ENCODE measurements at regions of chr15 and their contacts with region 1.

Region 1: DNA sequence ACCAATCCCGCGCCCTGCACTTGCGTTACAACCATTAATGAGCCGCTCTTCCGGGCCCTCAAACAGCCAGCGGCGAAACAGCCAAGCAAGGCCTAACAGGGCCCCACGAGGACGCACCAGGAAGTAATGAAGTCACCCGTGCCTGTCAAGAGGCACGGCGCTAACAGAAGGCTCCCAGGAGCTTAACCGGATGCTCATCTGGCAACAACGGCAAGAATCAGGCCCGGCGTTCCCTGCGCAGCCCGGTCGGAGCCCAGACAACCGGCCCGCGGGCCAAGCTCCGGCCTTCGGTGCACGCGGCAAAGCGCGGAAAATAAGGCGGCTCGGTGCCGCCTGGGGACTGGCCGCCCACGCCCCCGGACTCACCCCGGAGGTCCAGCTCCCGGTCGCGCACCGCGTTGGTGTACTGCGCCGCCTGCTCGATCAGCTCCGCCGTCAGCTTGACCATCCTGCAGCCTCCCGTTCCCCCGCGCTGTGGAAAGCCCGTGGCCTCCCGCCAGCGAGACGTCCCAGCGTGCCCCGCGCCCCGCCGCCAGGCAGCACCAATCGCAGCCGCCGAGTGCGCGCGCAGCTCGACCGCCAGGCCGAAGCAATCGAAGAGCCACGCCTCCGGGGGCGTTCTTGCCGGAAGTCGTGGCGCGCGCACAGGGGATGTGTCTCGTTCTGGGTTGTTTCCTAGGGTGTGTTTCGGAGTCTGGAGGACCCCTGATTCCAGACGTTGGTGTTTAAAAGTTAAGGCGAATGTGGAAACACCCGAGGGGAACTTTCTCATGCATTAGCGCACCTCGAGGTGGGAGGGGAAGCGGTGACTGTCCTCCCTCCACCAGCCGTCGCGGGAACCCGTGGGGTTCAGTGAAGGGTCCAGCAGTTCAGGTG is at the start of gene SNRPA1:
- DNase-seq: peak; percentile 99
- ATAC-seq: peak; percentile 83
- H3K4me3 Mint-ChIP-seq: peak within 1 kb of the TSS; percentile 97
- H3K27ac Mint-ChIP-seq: peak within 1 kb of the TSS; percentile 95
- H3K4me1 Mint-ChIP-seq: peaks cover 45% of the 10 kb centered on the region
- H3K27me3 Mint-ChIP-seq: no peaks in the 10 kb centered on the region
- CTCF ChIP-seq: no peak
- total RNA-seq, gene SNRPA1: 119 and 122 TPM in 2 replicates

Region 2: GRCh38 chr15:101088788-101089583 is 206.0 kb before region 1 on chr15:
- CTCF ChIA-PET with region 1: no interaction called
- POLR2A ChIA-PET with region 1: no interaction called
- intact Hi-C with region 1: no loop called
- DNase-seq: peak; percentile 86
- ATAC-seq: peak; percentile 98
- H3K4me3 Mint-ChIP-seq: no peak overlapping the region
- H3K27ac Mint-ChIP-seq: no peak overlapping the region
- H3K4me1 Mint-ChIP-seq: no peaks in the 10 kb centered on the region
- H3K27me3 Mint-ChIP-seq: no peaks in the 10 kb centered on the region
- CTCF ChIP-seq: peak; percentile 52

Region 3: DNA sequence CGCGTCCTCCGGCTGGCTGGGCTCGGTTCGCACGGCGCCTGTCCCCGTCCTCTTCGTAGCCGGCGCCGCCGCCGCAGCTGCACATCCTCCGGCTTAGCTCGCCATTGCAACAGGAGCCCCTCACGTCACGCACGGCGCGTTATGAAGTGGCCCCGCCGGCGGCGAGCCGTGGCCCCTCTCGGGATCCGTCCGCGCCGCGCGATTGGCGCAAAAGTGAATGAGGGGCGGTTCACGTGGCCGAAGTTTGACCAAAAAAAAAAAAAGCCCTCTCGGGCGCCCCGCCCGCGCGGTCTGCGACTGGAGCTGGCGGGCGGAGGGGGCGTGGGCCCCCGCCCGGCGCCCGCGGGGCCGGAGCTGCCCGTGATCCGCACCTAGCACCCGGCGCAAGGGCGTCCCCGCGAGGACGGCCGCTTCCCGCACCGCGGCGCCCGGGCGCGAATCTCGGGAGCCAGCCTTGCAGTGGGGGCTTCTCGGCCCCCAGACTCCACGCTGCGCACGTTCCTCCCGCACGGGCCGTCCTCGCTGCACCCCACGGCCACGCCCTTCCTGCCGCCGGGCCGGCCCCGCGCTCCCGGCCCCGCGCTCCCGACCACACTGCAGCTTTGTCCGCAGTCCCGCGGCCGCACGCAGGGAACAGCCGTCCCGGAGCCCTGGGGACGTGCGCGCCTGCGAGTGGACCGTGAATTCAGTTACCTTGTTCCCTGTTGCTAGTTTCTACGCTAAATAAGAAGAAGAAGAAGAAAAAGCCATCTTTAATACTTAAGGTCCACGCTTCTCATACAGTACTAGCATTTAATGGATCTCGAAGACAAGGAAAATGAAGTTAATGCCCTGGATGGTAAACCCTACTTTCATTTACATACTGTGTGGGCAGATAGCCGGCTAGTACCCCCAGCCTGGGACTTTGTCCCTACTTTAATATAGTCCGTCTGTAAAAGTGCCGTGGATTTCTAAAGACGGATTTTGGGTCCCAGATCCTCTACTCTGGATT is 42.8 kb before region 1 on chr15 and contains the start of gene CHSY1:
- CTCF ChIA-PET with region 1: interaction called, 3 read pairs
- POLR2A ChIA-PET with region 1: interaction called, 30 read pairs
- intact Hi-C with region 1: loop called (anchors 1 kb)
- DNase-seq: peak; percentile 93
- ATAC-seq: peak; percentile 88
- H3K4me3 Mint-ChIP-seq: peak within 1 kb of the TSS; percentile 95
- H3K27ac Mint-ChIP-seq: peak within 1 kb of the TSS; percentile 92
- H3K4me1 Mint-ChIP-seq: peaks cover 43% of the 10 kb centered on the region
- H3K27me3 Mint-ChIP-seq: no peaks in the 10 kb centered on the region
- CTCF ChIP-seq: no peak
- total RNA-seq, gene CHSY1: 16.5 and 20.4 TPM in 2 replicates

Region 4: GRCh38 chr15:101320501-101321052 is 25.6 kb after region 1 on chr15:
- CTCF ChIA-PET with region 1: no interaction called
- POLR2A ChIA-PET with region 1: interaction called, 3 read pairs
- intact Hi-C with region 1: loop called (anchors 2 kb)
- DNase-seq: no peak
- ATAC-seq: peak; percentile 73
- H3K4me3 Mint-ChIP-seq: peak overlapping the region; percentile 66
- H3K27ac Mint-ChIP-seq: no peak overlapping the region
- H3K4me1 Mint-ChIP-seq: peaks cover 12% of the 10 kb centered on the region
- H3K27me3 Mint-ChIP-seq: peaks cover 35% of the 10 kb centered on the region
- CTCF ChIP-seq: no peak

Region 5: DNA sequence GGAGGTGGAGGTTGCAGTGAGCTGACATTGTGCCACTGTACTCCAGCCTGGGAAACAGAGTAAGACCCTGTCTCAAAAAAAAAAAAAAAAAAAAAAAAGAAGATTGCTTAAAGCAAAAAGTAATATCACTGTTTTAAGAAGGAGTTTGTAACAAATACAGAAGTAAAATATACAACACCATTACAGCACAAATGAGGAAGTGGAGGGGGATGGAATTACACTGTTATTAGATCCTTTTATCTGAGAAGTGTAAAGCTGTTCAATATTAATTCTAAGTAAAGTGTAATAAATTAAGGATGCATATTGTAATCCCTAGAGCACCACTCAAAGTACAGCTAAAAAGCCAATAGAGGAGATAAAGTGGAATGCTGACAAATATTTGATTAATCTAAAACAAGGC is 47.1 kb after region 1 on chr15:
- CTCF ChIA-PET with region 1: no interaction called
- POLR2A ChIA-PET with region 1: no interaction called
- intact Hi-C with region 1: no loop called
- DNase-seq: no peak
- ATAC-seq: no peak
- H3K4me3 Mint-ChIP-seq: no peak overlapping the region
- H3K27ac Mint-ChIP-seq: no peak overlapping the region
- H3K4me1 Mint-ChIP-seq: no peaks in the 10 kb centered on the region
- H3K27me3 Mint-ChIP-seq: peaks cover 25% of the 10 kb centered on the region
- CTCF ChIP-seq: no peak

Region 6: DNA sequence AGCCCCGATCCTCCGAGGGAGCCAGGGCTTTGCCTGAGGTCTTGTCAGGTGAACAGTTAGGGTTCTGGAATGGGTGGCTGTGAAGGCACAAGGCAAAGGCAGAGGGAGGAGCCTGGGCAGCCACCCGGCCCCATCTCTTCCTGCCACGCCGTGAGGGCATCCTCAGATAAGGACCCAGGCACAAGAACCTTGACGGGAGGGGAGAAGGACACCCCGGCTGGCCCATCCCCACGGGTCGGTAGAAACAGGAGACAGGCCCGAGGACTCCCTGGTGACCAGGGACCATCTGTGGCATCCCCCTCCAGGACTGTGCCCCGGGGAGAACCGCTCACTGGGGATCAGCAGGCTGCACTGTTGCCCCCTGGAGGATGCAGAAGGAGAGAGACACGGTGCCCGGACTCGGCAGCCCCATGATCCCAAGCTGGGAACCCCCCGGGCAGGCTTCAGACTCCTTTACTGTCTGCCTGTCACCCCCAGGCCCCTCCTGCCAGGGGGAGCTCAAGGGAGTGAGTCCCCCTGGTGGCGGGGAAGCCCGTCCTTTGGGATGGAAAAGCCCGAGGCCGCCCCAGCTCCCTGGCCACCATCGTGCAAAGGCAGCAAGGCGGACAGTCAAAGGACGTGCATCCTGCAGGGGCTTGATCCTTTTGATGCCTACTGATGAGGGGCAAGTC is 206.9 kb after region 1 on chr15:
- CTCF ChIA-PET with region 1: interaction called, 9 read pairs
- POLR2A ChIA-PET with region 1: no interaction called
- intact Hi-C with region 1: loop called (anchors 1 kb)
- DNase-seq: peak; percentile 26
- ATAC-seq: peak; percentile 88
- H3K4me3 Mint-ChIP-seq: peak overlapping the region; percentile 61
- H3K27ac Mint-ChIP-seq: no peak overlapping the region
- H3K4me1 Mint-ChIP-seq: peaks cover 18% of the 10 kb centered on the region
- H3K27me3 Mint-ChIP-seq: peaks cover 34% of the 10 kb centered on the region
- CTCF ChIP-seq: no peak

Region 7: DNA sequence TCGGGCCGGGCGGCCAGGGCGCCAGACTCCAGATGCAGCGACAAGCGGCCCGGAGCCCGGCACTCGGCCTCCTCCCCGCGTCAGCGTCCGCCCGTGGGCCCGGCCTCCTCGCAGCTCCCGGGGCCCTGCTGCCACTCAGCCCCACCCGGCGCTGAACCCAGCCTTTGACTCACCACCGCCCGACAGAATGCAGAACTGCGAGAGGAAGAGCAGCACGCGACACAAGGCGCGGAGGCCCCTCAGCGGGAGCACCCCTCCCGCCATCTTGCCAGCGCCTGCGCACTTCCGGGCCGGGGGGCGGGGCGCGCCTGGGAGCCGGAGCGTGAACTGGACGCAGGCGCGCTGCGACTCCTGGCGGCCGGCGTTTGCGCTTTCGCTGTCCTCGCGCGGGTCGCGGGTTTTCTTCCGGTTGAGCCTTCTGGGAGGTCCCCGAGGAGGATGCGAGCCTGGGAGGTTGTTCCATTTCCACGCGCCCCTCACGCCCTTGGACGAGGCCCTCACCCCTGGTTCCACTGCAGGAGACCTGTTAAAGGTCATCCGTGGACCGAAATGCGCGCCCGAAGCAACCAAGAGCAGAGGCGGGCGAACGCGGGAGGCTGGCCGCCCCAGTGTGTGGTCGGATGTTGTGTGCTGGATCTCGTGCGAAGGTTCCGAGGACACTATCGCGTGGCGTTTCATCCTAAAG is 357.3 kb after region 1 on chr15 and contains the start of gene TM2D3:
- CTCF ChIA-PET with region 1: interaction called, 5 read pairs
- POLR2A ChIA-PET with region 1: interaction called, 29 read pairs
- intact Hi-C with region 1: loop called (anchors 1 kb)
- DNase-seq: peak; percentile 99
- ATAC-seq: peak; percentile 87
- H3K4me3 Mint-ChIP-seq: peak within 1 kb of the TSS; percentile 92
- H3K27ac Mint-ChIP-seq: peak within 1 kb of the TSS; percentile 95
- H3K4me1 Mint-ChIP-seq: peaks cover 46% of the 10 kb centered on the region
- H3K27me3 Mint-ChIP-seq: no peaks in the 10 kb centered on the region
- CTCF ChIP-seq: no peak
- total RNA-seq, gene TM2D3: 45.8 and 49.9 TPM in 2 replicates

Measured in activated B cell treated with CpG ODN at 0.5 μM for 24 hours (primary cell).